ENCODE measurements at regions of chr7 and their contacts with region 1.

Region 1: GRCh38 chr7:23298885-23299769 is at the start of gene MALSU1:
- DNase-seq: peak; percentile 94 to 95 (median 95)
- H3K4me3 ChIP-seq: peak within 1 kb of the TSS; percentile 85 to 93
- H3K4me3 Mint-ChIP-seq: peak within 1 kb of the TSS; percentile 90 to 96 (median 94)
- H3K27ac ChIP-seq: peak within 1 kb of the TSS; percentile 79
- H3K27ac Mint-ChIP-seq: peak within 1 kb of the TSS; percentile 73 to 100 (median 97)
- H3K4me1 ChIP-seq: peaks cover 41% of the 10 kb centered on the region
- H3K4me1 Mint-ChIP-seq: peaks cover 29 to 56% (median 45%) of the 10 kb centered on the region in 4 donors
- H3K27me3 ChIP-seq: no peaks in the 10 kb centered on the region
- H3K27me3 Mint-ChIP-seq: peaks cover 0 to 3% of the 10 kb centered on the region in 2 donors
- total RNA-seq, gene MALSU1: 39.3 to 46.5 TPM

Region 2: GRCh38 chr7:23013715-23014649 is 285.1 kb before region 1 on chr7 and contains the start of gene HYCC1:
- CTCF ChIA-PET with region 1: no interaction called
- POLR2A ChIA-PET with region 1: no interaction called
- intact Hi-C with region 1: loop called (anchors 1 kb)
- DNase-seq: peak; percentile 99 to 100 (median 100)
- H3K4me3 ChIP-seq: peak within 1 kb of the TSS; percentile 55 to 76
- H3K4me3 Mint-ChIP-seq: peak within 1 kb of the TSS; percentile 94 to 99 (median 97)
- H3K27ac ChIP-seq: peak within 1 kb of the TSS; percentile 58
- H3K27ac Mint-ChIP-seq: peak within 1 kb of the TSS; percentile 88 to 99 (median 93)
- H3K4me1 ChIP-seq: peaks cover 49% of the 10 kb centered on the region
- H3K4me1 Mint-ChIP-seq: peaks cover 12 to 28% (median 24%) of the 10 kb centered on the region in 4 donors
- H3K27me3 ChIP-seq: no peaks in the 10 kb centered on the region
- H3K27me3 Mint-ChIP-seq: peaks cover 0 to 2% of the 10 kb centered on the region in 2 donors
- total RNA-seq, gene HYCC1: 16.2 to 19.6 TPM

Region 3: GRCh38 chr7:23181684-23182553 is 117.2 kb before region 1 on chr7 and contains the start of gene NUP42:
- CTCF ChIA-PET with region 1: no interaction called
- POLR2A ChIA-PET with region 1: interaction called, 7 read pairs
- intact Hi-C with region 1: loop called (anchors 1 kb)
- DNase-seq: peak; percentile 93 to 96 (median 95)
- H3K4me3 ChIP-seq: peak within 1 kb of the TSS; percentile 95 to 98
- H3K4me3 Mint-ChIP-seq: peak within 1 kb of the TSS; percentile 94 to 100 (median 98)
- H3K27ac ChIP-seq: peak within 1 kb of the TSS; percentile 90
- H3K27ac Mint-ChIP-seq: peak within 1 kb of the TSS; percentile 96 to 100 (median 99)
- H3K4me1 ChIP-seq: peaks cover 38% of the 10 kb centered on the region
- H3K4me1 Mint-ChIP-seq: peaks cover 24 to 43% (median 27%) of the 10 kb centered on the region in 4 donors
- H3K27me3 ChIP-seq: no peaks in the 10 kb centered on the region
- H3K27me3 Mint-ChIP-seq: peaks cover 0 to 2% of the 10 kb centered on the region in 2 donors
- total RNA-seq, gene NUP42: 33.3 to 37.8 TPM

Region 4: DNA sequence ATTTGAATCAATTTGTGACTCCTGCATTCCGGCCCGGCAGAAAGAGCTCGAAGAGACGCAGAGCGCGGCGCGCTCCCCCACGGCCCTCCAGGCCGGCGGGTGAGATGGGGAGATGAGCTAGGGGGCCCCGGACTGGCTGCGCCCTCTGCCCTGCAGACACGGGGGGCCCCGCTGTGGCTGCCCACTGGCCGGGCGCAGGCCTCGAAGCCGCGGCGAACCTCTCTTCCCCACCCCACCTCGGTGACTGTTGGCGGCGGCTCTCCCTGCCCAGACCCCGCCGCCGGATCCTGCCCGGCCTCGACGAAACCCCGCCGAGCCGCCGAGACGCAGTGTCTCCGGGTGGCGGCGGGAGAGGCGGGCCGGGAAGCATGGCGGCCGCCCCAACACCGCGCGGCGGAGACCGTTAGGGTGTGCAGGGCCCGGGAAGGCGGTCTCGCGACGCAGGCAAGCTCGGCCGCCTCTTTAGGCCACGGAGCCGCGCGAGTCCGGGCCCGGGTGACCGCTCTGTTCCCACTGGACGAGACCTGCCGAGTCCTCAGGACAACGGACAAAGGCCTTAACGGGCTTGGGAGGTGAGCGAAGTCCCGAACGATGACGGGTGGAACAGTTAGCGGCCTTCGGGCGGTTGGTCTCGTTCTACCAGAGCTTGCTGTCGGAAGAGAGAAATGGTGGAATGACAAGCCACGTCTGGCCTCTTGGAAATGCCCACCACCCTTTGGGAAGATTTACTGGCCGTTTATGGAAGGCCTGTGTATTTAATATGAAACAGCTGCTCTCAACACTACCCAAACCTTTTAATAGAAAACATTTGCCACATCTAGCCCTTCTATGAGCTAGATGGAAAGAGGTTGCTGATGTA is 93.0 kb before region 1 on chr7:
- CTCF ChIA-PET with region 1: no interaction called
- POLR2A ChIA-PET with region 1: no interaction called
- intact Hi-C with region 1: no loop called
- DNase-seq: peak in 1 of 5 donors; percentile 39
- H3K4me3 ChIP-seq: no peak overlapping the region
- H3K4me3 Mint-ChIP-seq: peak overlapping the region in 4 of 8 donors; percentile 8 to 55 (median 17)
- H3K27ac ChIP-seq: no peak overlapping the region
- H3K27ac Mint-ChIP-seq: peak overlapping the region in 1 of 7 donors; percentile 31
- H3K4me1 ChIP-seq: no peaks in the 10 kb centered on the region
- H3K4me1 Mint-ChIP-seq: peaks cover 0 to 5% (median 3%) of the 10 kb centered on the region in 4 donors
- H3K27me3 ChIP-seq: peaks cover 3% of the 10 kb centered on the region
- H3K27me3 Mint-ChIP-seq: peaks cover 10 to 20% of the 10 kb centered on the region in 2 donors

Region 5: GRCh38 chr7:23347682-23348180 is 48.6 kb after region 1 on chr7:
- CTCF ChIA-PET with region 1: no interaction called
- POLR2A ChIA-PET with region 1: interaction called, 7 read pairs
- intact Hi-C with region 1: loop called (anchors 2 kb)
- DNase-seq: no peak
- H3K4me3 ChIP-seq: no peak overlapping the region
- H3K4me3 Mint-ChIP-seq: peak overlapping the region in 2 of 8 donors; percentile 63 to 83
- H3K27ac ChIP-seq: no peak overlapping the region
- H3K27ac Mint-ChIP-seq: no peak overlapping the region
- H3K4me1 ChIP-seq: peaks cover 14% of the 10 kb centered on the region
- H3K4me1 Mint-ChIP-seq: peaks cover 6 to 24% (median 15%) of the 10 kb centered on the region in 4 donors
- H3K27me3 ChIP-seq: no peaks in the 10 kb centered on the region
- H3K27me3 Mint-ChIP-seq: peaks cover 2 to 4% of the 10 kb centered on the region in 2 donors

Region 6: DNA sequence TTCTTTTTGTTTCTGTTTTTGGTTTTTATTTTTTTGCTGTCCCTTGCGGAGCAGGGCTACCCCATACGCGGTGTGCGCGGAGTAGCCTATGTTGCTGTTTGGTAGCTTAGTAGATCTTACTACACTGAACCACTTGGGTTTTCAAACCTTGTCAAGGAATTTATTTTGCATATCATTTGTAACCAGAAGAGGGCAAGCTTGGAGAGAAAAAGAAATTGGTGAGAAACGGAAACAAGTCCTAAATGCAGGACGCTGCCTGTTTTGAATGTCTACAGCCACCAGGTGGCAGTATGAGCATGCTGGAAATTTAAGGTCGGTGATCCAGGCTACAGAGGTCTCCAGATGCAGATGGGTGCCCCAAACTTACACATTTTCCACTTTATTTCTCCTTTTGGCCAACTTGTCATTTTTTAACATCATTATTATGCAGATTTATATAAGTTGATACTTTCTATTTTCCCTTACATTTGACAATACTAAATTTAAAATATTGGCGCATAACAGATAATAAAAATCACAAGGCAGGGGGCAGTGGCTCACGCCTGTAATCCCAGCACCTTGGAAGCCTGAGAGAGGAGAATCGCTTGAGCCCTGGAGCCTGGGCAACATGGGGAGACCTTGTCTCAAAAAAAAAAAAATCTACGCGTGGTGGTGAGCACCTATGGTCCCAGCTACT is 247.9 kb after region 1 on chr7:
- CTCF ChIA-PET with region 1: no interaction called
- POLR2A ChIA-PET with region 1: interaction called, 3 read pairs
- intact Hi-C with region 1: loop called (anchors 1 kb)
- DNase-seq: peak; percentile 78 to 85 (median 84)
- H3K4me3 ChIP-seq: no peak overlapping the region
- H3K4me3 Mint-ChIP-seq: peak overlapping the region in 1 of 8 donors; percentile 39
- H3K27ac ChIP-seq: no peak overlapping the region
- H3K27ac Mint-ChIP-seq: peak overlapping the region in 5 of 7 donors; percentile 0 to 68 (median 51)
- H3K4me1 ChIP-seq: no peaks in the 10 kb centered on the region
- H3K4me1 Mint-ChIP-seq: peaks cover 5 to 7% (median 6%) of the 10 kb centered on the region in 4 donors
- H3K27me3 ChIP-seq: no peaks in the 10 kb centered on the region
- H3K27me3 Mint-ChIP-seq: no peaks in the 10 kb centered on the region

Region 7: DNA sequence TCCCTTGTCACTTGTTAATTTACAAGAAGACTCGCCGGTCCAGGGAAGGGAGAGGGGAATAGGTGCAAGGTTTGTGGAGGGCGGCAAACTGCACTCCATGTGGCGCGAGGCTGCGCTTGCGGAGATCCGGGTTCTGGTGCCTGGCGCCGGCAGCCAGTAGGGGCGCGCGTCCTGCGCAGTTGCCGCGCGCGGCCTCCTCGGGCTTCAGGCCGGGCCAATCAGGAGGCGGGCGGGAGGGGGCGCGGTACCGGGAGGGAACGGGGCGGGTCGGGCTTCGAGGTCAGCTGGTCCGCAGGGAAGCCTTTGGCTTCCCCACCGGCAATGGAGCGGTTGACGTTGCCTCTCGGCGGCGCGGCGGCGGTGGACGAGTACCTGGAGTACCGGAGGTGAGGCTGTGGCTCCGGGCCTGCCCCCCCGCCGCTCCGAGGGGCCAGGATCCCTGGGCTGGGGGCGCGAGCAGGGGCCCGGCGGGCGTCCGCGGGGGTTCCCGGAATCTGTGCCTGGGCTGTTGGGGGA is 380.8 kb after region 1 on chr7 and contains the start of gene FAM221A:
- CTCF ChIA-PET with region 1: no interaction called
- POLR2A ChIA-PET with region 1: no interaction called
- intact Hi-C with region 1: loop called (anchors 2 kb)
- DNase-seq: peak; percentile 71 to 86 (median 77)
- H3K4me3 ChIP-seq: peak within 1 kb of the TSS; percentile 79 to 83
- H3K4me3 Mint-ChIP-seq: peak within 1 kb of the TSS; percentile 93 to 97 (median 96)
- H3K27ac ChIP-seq: peak within 1 kb of the TSS; percentile 68
- H3K27ac Mint-ChIP-seq: peak within 1 kb of the TSS; percentile 78 to 93 (median 87)
- H3K4me1 ChIP-seq: peaks cover 4% of the 10 kb centered on the region
- H3K4me1 Mint-ChIP-seq: peaks cover 7 to 30% (median 16%) of the 10 kb centered on the region in 4 donors
- H3K27me3 ChIP-seq: no peaks in the 10 kb centered on the region
- H3K27me3 Mint-ChIP-seq: peaks cover 0 to 4% of the 10 kb centered on the region in 2 donors
- total RNA-seq, gene FAM221A: 6.8 to 7.3 TPM

Region 8: GRCh38 chr7:25125137-25125946 is 1826.2 kb after region 1 on chr7 and contains the start of gene CYCS:
- CTCF ChIA-PET with region 1: no interaction called
- POLR2A ChIA-PET with region 1: interaction called, 3 read pairs
- intact Hi-C with region 1: loop called (anchors 1 kb)
- DNase-seq: peak; percentile 99 to 100 (median 99)
- H3K4me3 ChIP-seq: peak within 1 kb of the TSS; percentile 72 to 82
- H3K4me3 Mint-ChIP-seq: peak within 1 kb of the TSS; percentile 97 to 100 (median 100)
- H3K27ac ChIP-seq: peak within 1 kb of the TSS; percentile 97
- H3K27ac Mint-ChIP-seq: peak within 1 kb of the TSS; percentile 96 to 100 (median 100)
- H3K4me1 ChIP-seq: peaks cover 9% of the 10 kb centered on the region
- H3K4me1 Mint-ChIP-seq: peaks cover 14 to 26% (median 15%) of the 10 kb centered on the region in 4 donors
- H3K27me3 ChIP-seq: no peaks in the 10 kb centered on the region
- H3K27me3 Mint-ChIP-seq: no peaks in the 10 kb centered on the region
- total RNA-seq, gene CYCS: 46.9 to 54.2 TPM